ENCODE measurements at regions of chr19 and their contacts with region 1.

Region 1: DNA sequence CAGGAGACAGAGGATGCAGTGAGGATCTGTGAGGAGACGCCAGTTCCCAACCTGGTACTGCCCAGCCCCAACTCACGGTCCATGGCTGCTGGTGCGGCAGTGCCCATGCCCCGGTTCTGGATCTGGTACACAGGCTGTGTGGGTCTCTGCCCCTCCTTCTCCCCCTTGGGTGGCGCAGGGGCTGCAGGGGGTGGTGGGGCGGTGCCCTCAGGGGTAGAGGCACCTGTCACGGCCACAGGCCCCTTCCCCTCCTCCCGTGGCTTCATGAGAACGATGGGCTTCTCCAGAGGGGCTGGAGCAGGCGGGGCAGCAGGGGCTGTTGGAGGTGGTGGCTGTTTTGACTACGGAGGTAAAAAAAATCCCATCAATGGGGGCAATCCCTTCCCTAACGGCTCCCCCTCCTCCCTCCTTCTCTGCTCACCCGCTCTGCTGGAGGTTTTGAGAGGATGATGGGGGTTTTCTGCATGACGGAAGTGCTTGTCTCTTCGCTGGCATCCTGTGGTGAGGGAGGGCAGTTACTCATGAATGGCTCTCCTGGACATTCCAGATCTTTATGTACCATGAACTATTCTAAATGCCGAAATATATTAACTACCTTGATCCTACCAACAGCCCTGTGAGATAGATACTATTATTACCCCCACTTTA is 7.1 kb downstream of the SMG9 start:
- H3K4me3 ChIP-seq: no peak overlapping the region
- H3K27ac ChIP-seq: 0 out of 2 replicates have a peak overlapping the region, but pooled peaks have one; percentile 17
- H3K4me1 ChIP-seq: no peaks in the 10 kb centered on the region; the same call in 1 of the 2 replicates
- CTCF ChIP-seq: no peak

Region 2: GRCh38 chr19:43723588-43723987 is 24.1 kb before region 1 on chr19:
- CTCF ChIA-PET with region 1: interaction called, 36 read pairs
- POLR2A ChIA-PET with region 1: no interaction called
- H3K4me3 ChIP-seq: no peak overlapping the region
- H3K27ac ChIP-seq: no peak overlapping the region
- H3K4me1 ChIP-seq: no peaks in the 10 kb centered on the region
- CTCF ChIP-seq: peak; percentile 53

Region 3: GRCh38 chr19:43731846-43732245 is 15.8 kb before region 1 on chr19:
- CTCF ChIA-PET with region 1: interaction called, 50 read pairs
- POLR2A ChIA-PET with region 1: interaction called, 3 read pairs
- H3K4me3 ChIP-seq: no peak overlapping the region
- H3K27ac ChIP-seq: no peak overlapping the region
- H3K4me1 ChIP-seq: no peaks in the 10 kb centered on the region
- CTCF ChIP-seq: no peak

Region 4: GRCh38 chr19:43784981-43785808 is 37.5 kb after region 1 on chr19:
- CTCF ChIA-PET with region 1: interaction called, 203 read pairs
- POLR2A ChIA-PET with region 1: interaction called, 10 read pairs
- H3K4me3 ChIP-seq: no peak overlapping the region
- H3K27ac ChIP-seq: no peak overlapping the region
- H3K4me1 ChIP-seq: no peaks in the 10 kb centered on the region; the same call in 1 of the 2 replicates
- CTCF ChIP-seq: peak; percentile 99

Region 5: DNA sequence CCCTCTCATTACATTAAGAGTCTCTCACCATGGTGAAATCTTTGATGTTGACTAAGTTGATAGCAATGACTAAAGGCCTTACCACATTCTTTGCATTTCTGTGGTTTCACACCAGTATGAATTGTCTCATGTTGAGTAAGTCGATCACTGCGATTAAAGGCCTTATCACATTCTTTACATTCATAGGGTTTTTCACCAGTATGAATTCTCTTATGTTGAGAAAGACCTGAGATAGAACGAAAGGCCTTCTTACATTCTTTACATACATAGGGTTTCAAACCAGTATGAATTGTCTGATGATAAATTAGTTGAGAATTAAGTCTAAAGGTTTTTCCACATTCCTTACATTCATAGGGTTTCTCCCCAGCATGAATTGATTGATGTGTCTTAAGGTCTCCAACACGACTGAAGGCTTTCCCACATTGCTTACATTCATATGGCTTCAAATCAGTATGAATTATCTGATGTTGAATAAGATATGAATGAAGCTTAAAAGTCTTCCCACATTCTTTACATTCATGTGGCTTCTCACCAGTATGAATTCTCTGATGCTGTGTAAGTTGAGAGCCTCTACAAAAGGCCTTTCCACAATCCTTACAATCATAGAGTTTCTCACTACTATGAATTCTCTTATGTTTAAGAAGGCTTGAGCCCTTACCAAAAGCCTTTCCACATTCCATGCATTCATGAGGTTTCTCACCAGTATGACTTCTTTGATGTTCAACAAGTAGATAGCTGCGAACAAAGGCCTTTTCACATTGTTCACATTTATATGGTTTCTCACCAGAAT is 125.1 kb after region 1 on chr19:
- CTCF ChIA-PET with region 1: no interaction called
- POLR2A ChIA-PET with region 1: no interaction called
- H3K4me3 ChIP-seq: no peak overlapping the region
- H3K27ac ChIP-seq: no peak overlapping the region
- H3K4me1 ChIP-seq: no peaks in the 10 kb centered on the region
- CTCF ChIP-seq: no peak

Measured in HEK293 (cell line).